Activated T-helper 1 cell treated with anti-CD3 and anti-CD28 coated beads, Interleukin-12 subunit alpha, Interleukin-12 subunit beta, Interleukin-2, Interleukin-4 antibody, amounts not matched to agents 30 ng/mL and 10 ng/mL and 1 ng/mL, durations not matched to agents 14 hours and 24 hours and 36 hours (primary cell): ENCODE measurements at regions of chr20 and their contacts with region 1.

Region 1: DNA sequence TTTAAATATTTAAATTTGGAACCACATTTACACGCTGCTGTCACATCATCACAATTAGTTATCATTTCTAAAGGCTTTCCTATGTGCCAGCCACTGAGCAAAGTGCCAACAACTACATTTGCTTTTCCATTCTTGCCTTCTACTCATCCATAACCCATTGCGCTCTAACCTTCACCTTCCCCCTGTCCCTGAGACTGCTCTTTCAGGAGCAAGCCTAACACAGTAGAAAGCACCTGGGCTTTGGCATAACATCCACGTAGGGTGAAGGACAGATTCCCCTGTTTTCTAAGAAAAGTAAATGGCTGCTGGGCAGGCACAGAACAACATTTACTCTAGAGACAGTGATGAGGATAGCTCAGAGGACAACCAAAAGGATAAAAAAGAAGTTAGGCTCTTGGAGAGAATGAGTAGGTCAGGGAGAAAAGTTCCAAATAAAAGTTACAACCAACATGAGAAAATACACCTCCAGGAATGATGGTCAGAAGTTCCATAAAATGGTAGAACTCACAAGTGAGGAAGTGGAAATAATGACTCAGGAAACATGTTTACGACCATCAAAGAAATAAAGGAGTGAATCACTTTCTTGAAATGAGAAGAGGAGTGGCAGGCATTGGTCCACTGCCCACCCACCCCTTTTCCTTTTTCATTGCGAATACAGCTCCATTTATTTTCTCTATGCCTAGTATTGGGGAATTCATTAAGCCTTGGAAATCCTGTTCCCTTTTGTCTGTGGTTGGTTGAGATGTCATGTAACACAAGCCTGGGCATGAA is 77.2 kb downstream of the PFDN4 start:
- DNase-seq: no peak
- H3K4me3 Mint-ChIP-seq: peak overlapping the region; percentile 79
- H3K27ac Mint-ChIP-seq: peak overlapping the region; percentile 96
- H3K4me1 Mint-ChIP-seq: peaks cover 28% of the 10 kb centered on the region
- H3K27me3 Mint-ChIP-seq: no peaks in the 10 kb centered on the region

Region 2: GRCh38 chr20:54207743-54208547 is 77.2 kb before region 1 on chr20 and contains the start of gene PFDN4:
- intact Hi-C with region 1: loop called (anchors 1 kb)
- DNase-seq: peak; percentile 79
- H3K4me3 Mint-ChIP-seq: peak within 1 kb of the TSS; percentile 96
- H3K27ac Mint-ChIP-seq: peak within 1 kb of the TSS; percentile 99
- H3K4me1 Mint-ChIP-seq: peaks cover 31% of the 10 kb centered on the region
- H3K27me3 Mint-ChIP-seq: no peaks in the 10 kb centered on the region
- total RNA-seq, gene PFDN4: 72.6 and 75.8 TPM in 2 replicates

Region 3: GRCh38 chr20:54219751-54220426 is 65.2 kb before region 1 on chr20:
- intact Hi-C with region 1: loop called (anchors 2 kb)
- DNase-seq: no peak
- H3K4me3 Mint-ChIP-seq: no peak overlapping the region
- H3K27ac Mint-ChIP-seq: no peak overlapping the region
- H3K4me1 Mint-ChIP-seq: peaks cover 22% of the 10 kb centered on the region
- H3K27me3 Mint-ChIP-seq: no peaks in the 10 kb centered on the region

Region 4: GRCh38 chr20:54320115-54320607 is 35.0 kb after region 1 on chr20:
- intact Hi-C with region 1: loop called (anchors 1 kb)
- DNase-seq: no peak
- H3K4me3 Mint-ChIP-seq: no peak overlapping the region
- H3K27ac Mint-ChIP-seq: peak overlapping the region; percentile 67
- H3K4me1 Mint-ChIP-seq: peaks cover 40% of the 10 kb centered on the region
- H3K27me3 Mint-ChIP-seq: no peaks in the 10 kb centered on the region

Region 5: DNA sequence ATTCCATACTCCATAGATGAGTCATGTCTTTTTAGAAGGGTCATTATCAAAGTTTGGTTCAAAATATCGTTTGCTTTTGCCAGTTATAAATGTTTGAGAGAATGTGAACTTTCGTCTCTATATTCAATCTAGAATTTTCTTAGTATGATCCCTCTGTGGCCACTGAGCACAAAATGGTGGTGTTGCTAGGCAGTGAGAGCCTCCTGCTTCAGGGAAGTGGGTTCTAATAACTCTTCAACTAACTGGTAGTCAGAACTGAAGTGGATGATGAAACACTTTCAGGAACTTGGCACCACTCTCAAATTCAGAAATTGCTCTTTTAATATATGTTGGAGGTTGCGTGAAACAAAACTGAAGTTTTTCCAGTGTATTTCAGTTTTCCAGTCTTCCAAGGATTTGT is 65.3 kb after region 1 on chr20:
- intact Hi-C with region 1: loop called (anchors 1 kb)
- DNase-seq: no peak
- H3K4me3 Mint-ChIP-seq: no peak overlapping the region
- H3K27ac Mint-ChIP-seq: peak overlapping the region; percentile 25
- H3K4me1 Mint-ChIP-seq: peaks cover 43% of the 10 kb centered on the region
- H3K27me3 Mint-ChIP-seq: no peaks in the 10 kb centered on the region

Region 6: DNA sequence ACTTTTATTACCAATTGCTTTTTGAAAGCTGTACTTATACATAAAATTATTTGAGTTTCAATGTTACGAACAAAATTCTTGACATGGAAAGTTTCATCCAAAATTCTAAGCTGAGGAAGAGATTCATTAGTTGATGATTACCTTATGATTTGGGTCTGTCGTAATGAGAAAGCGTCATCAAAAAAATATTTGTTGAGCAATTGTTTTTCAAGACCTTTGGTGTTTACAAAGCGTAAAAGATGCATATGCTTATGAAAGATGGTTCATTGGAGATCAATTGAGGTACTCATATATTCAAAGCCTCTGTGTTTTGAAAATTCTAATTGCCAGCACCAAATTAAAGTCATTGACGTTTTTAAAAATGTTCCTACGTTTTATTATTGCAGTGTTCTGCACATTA is 79.8 kb after region 1 on chr20:
- intact Hi-C with region 1: loop called (anchors 1 kb)
- DNase-seq: no peak
- H3K4me3 Mint-ChIP-seq: no peak overlapping the region
- H3K27ac Mint-ChIP-seq: no peak overlapping the region
- H3K4me1 Mint-ChIP-seq: peaks cover 10% of the 10 kb centered on the region
- H3K27me3 Mint-ChIP-seq: no peaks in the 10 kb centered on the region